IMR-90 (cell line): ENCODE measurements at regions of chr3 and their contacts with region 1.

Region 1: GRCh38 chr3:183252973-183253901 is at the start of gene B3GNT5:
- DNase-seq: peak; percentile 41
- ATAC-seq: peak; percentile 73
- H3K4me3 ChIP-seq: peak within 1 kb of the TSS; percentile 61
- H3K27ac ChIP-seq: no peak within 1 kb of the TSS; the same call in 1 of the 2 replicates
- H3K4me1 ChIP-seq: no peaks in the 10 kb centered on the region
- H3K27me3 ChIP-seq: peaks cover 36% of the 10 kb centered on the region
- CTCF ChIP-seq: no peak
- POLR2A ChIP-seq: no peak
- RAD21 ChIP-seq: no peak
- total RNA-seq, gene B3GNT5: 3.4 and 4.4 TPM in 2 replicates

Region 2: GRCh38 chr3:183122257-183122932 is 130.8 kb before region 1 on chr3:
- CTCF ChIA-PET with region 1: no interaction called
- POLR2A ChIA-PET with region 1: no interaction called
- dilution Hi-C with region 1: no loop called
- in situ Hi-C with region 1: no loop called
- intact Hi-C with region 1: loop called (anchors 5 kb)
- DNase-seq: peak; percentile 74
- ATAC-seq: peak; percentile 78
- H3K4me3 ChIP-seq: no peak overlapping the region
- H3K27ac ChIP-seq: no peak overlapping the region
- H3K4me1 ChIP-seq: 0 out of 2 replicates have a peak, but pooled peaks cover 2% of the 10 kb centered on the region
- H3K27me3 ChIP-seq: peaks cover 12% of the 10 kb centered on the region
- CTCF ChIP-seq: peak; percentile 93
- POLR2A ChIP-seq: no peak
- RAD21 ChIP-seq: peak; percentile 87

Region 3: GRCh38 chr3:183291497-183292040 is 38.3 kb after region 1 on chr3:
- CTCF ChIA-PET with region 1: no interaction called
- POLR2A ChIA-PET with region 1: no interaction called
- dilution Hi-C with region 1: no loop called
- in situ Hi-C with region 1: no loop called
- intact Hi-C with region 1: loop called (anchors 2 kb)
- DNase-seq: peak; percentile 66
- ATAC-seq: no peak; the same call in none of the 2 replicates
- H3K4me3 ChIP-seq: no peak overlapping the region
- H3K27ac ChIP-seq: no peak overlapping the region
- H3K4me1 ChIP-seq: peaks cover 12% of the 10 kb centered on the region
- H3K27me3 ChIP-seq: no peaks in the 10 kb centered on the region
- CTCF ChIP-seq: no peak
- POLR2A ChIP-seq: no peak
- RAD21 ChIP-seq: no peak